Transverse colon (tissue), 4 donors: ENCODE measurements at regions of chr5 and their contacts with region 1.

Region 1: DNA sequence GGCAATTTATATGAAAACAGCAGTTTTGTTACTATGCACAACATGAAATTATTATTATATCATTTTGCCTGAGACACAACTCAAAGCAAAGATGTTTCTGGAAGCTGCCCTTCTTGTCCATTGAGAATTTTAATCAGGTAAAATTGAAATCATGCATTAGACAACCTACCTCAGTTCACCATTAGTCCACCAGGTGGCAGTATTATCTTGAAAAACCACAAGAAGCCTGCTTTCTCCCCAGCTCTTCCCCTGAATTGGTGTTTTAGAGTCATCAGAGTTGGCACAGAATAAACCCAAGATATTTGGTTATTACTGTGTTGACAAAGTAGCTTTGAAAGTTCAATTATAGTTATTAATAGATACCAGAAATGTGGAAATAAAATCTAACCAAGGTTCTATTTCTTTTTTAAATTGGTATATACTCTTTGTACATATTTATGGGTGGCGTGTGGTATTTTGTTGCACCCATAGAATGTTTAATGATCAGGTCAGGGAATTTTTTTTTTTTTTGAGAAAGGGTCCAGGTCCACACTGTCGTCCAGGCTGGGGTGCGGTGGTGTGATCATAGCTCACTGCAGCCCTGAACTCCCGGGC is 25.7 kb downstream of the UTP15 start:
- DNase-seq: peak; percentile 17
- H3K4me3 ChIP-seq: no peak overlapping the region
- H3K27ac ChIP-seq: no peak overlapping the region
- H3K4me1 ChIP-seq: no peaks in the 10 kb centered on the region
- H3K27me3 ChIP-seq: no peaks in the 10 kb centered on the region
- CTCF ChIP-seq: peak; percentile 86 to 90 (median 89)
- EP300 ChIP-seq: no peak
- POLR2A ChIP-seq: no peak

Region 2: GRCh38 chr5:73693481-73694061 is 102.4 kb after region 1 on chr5:
- in situ Hi-C with region 1: loop called in 1 of 4 experiments (anchors 5 kb)
- intact Hi-C with region 1: no loop called
- DNase-seq: peak; percentile 17
- H3K4me3 ChIP-seq: no peak overlapping the region
- H3K27ac ChIP-seq: no peak overlapping the region
- H3K4me1 ChIP-seq: peaks cover 0 to 10% (median 0%) of the 10 kb centered on the region in 4 donors
- H3K27me3 ChIP-seq: no peaks in the 10 kb centered on the region
- CTCF ChIP-seq: peak; percentile 45 to 55 (median 53)
- EP300 ChIP-seq: no peak
- POLR2A ChIP-seq: no peak

Region 3: GRCh38 chr5:73792687-73793320 is 201.6 kb after region 1 on chr5:
- in situ Hi-C with region 1: loop called (anchors 5 kb)
- intact Hi-C with region 1: loop called (anchors 5 kb)
- DNase-seq: peak; percentile 75
- H3K4me3 ChIP-seq: no peak overlapping the region
- H3K27ac ChIP-seq: no peak overlapping the region
- H3K4me1 ChIP-seq: no peaks in the 10 kb centered on the region
- H3K27me3 ChIP-seq: no peaks in the 10 kb centered on the region
- CTCF ChIP-seq: peak; percentile 91 to 98 (median 94)
- EP300 ChIP-seq: no peak
- POLR2A ChIP-seq: no peak

Region 4: GRCh38 chr5:74212336-74212735 is 621.1 kb after region 1 on chr5:
- in situ Hi-C with region 1: no loop called
- intact Hi-C with region 1: no loop called
- DNase-seq: peak; percentile 11
- H3K4me3 ChIP-seq: no peak overlapping the region
- H3K27ac ChIP-seq: no peak overlapping the region
- H3K4me1 ChIP-seq: no peaks in the 10 kb centered on the region
- H3K27me3 ChIP-seq: no peaks in the 10 kb centered on the region
- CTCF ChIP-seq: no peak
- EP300 ChIP-seq: no peak
- POLR2A ChIP-seq: no peak

Region 5: GRCh38 chr5:74673011-74673790 is 1082.0 kb after region 1 on chr5:
- in situ Hi-C with region 1: loop called in 1 of 4 experiments (anchors 25 kb)
- intact Hi-C with region 1: no loop called
- DNase-seq: no peak
- H3K4me3 ChIP-seq: no peak overlapping the region
- H3K27ac ChIP-seq: peak overlapping the region in 1 of 4 donors; percentile 33
- H3K4me1 ChIP-seq: no peaks in the 10 kb centered on the region
- H3K27me3 ChIP-seq: no peaks in the 10 kb centered on the region
- CTCF ChIP-seq: peak in 4 of 5 experiments; percentile 22 to 44 (median 28)
- EP300 ChIP-seq: no peak
- POLR2A ChIP-seq: no peak